ENCODE measurements at regions of chr17 and their contacts with region 1.

Region 1: GRCh38 chr17:74379495-74380085 is 12.3 kb downstream of the GPR142 start:
- DNase-seq: peak; percentile 75 to 99
- H3K4me3 ChIP-seq: peak overlapping the region; percentile 1 to 54 (median 36); a peak in 6 of 8 replicates
- H3K27ac ChIP-seq: no peak overlapping the region
- H3K4me1 ChIP-seq: peaks cover 0 to 9% (median 6%) of the 10 kb centered on the region in 4 experiments; a peak in 6 of 7 replicates
- H3K27me3 ChIP-seq: 0 out of 7 replicates have a peak, but pooled peaks cover 0 to 1% (median 0%) of the 10 kb centered on the region in 4 experiments
- CTCF ChIP-seq: peak; percentile 86 to 96 (median 93)
- EP300 ChIP-seq: no peak
- POLR2A ChIP-seq: no peak
- RAD21 ChIP-seq: peak; percentile 98 to 99

Region 2: DNA sequence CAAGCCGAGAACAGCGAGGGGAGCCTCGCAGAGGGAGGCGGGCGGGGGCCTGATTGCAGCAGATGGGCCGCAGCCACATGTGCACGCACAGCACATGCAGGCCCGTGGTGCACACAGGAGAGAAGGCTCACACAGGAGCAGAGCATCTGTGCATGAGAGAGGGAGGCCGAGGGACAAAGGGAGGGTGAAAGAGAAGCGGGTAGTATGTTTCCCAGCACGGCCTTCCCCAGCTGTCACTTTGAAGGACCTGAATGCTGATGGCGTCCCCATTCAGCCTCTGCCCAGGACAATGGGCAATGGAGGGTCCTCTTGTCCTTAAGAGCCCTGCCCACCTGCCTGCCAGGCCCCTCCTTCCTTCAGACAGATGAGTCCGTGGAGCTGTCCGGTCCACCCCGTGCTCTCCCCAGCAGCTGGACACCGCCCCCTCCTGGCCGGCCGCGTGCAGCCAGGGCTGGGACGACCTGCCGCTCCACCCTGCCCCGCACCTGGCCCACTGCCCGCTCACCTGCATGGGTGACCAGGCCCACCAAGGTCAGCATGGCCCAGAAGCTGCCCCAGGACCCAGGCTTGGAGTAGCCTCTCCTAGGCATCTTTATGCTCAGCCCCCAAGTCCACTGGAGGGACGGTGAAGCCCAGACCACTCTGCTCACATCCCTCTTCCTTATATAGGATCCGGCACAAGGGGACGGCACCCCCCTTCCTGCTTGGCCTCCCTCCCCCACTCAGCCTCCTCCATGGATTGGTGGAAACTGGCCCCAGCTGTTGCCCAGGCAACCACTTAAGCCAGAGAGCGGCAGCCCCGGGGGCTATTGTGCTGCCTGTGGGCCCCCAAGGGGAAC is 18.1 kb before region 1 on chr17 and contains the start of gene BTBD17:
- CTCF ChIA-PET with region 1: interaction called, 106 read pairs
- POLR2A ChIA-PET with region 1: interaction called, 3 read pairs
- DNase-seq: peak in 1 of 2 experiments; percentile 97
- H3K4me3 ChIP-seq: peak within 1 kb of the TSS in 3 of 4 experiments; percentile 24 to 54 (median 45); a peak in 6 of 8 replicates
- H3K27ac ChIP-seq: peak within 1 kb of the TSS; percentile 48
- H3K4me1 ChIP-seq: peaks cover 5 to 29% (median 19%) of the 10 kb centered on the region in 4 experiments
- H3K27me3 ChIP-seq: no peaks in the 10 kb centered on the region
- CTCF ChIP-seq: peak; percentile 82 to 100 (median 93)
- EP300 ChIP-seq: no peak
- POLR2A ChIP-seq: peak in 1 of 2 experiments; percentile 40; a peak in 1 of 3 replicates
- RAD21 ChIP-seq: peak; percentile 62 to 73
- total RNA-seq, gene BTBD17: 7.0 and 7.8 TPM in 2 replicates

Region 3: DNA sequence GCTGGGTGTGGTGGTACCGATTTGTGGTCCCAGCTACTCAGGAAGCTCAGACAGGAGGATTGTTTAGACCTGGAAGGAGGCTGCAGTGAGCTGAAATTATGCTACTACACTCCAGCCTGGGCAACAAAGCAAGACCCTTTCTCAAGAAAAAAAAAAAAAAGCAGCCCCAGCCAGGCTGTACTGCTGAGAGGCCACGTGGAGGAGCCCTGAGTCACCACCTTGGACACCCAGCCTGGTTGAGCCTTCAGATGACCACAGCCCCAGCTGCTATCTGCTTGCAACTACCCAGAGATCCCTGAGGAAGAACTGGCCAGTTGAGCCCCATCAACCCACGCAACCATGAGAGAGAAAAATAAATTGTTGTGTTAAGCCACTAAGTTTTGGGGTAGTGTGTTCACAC is 28.7 kb after region 1 on chr17:
- CTCF ChIA-PET with region 1: interaction called, 14 read pairs
- POLR2A ChIA-PET with region 1: no interaction called
- DNase-seq: no peak
- H3K4me3 ChIP-seq: no peak overlapping the region
- H3K27ac ChIP-seq: no peak overlapping the region
- H3K4me1 ChIP-seq: peaks cover 3 to 23% (median 14%) of the 10 kb centered on the region in 4 experiments
- H3K27me3 ChIP-seq: no peaks in the 10 kb centered on the region
- CTCF ChIP-seq: peak; percentile 14 to 27 (median 15); a peak in 3 of 4 replicates
- EP300 ChIP-seq: no peak
- POLR2A ChIP-seq: no peak
- RAD21 ChIP-seq: peak; percentile 27 to 52; a peak in 3 of 4 replicates

Region 4: GRCh38 chr17:74437702-74438101 is 58.1 kb after region 1 on chr17:
- CTCF ChIA-PET with region 1: interaction called, 63 read pairs
- POLR2A ChIA-PET with region 1: interaction called, 5 read pairs
- DNase-seq: no peak
- H3K4me3 ChIP-seq: no peak overlapping the region
- H3K27ac ChIP-seq: no peak overlapping the region
- H3K4me1 ChIP-seq: peaks cover 5 to 16% (median 12%) of the 10 kb centered on the region in 4 experiments
- H3K27me3 ChIP-seq: peaks cover 0 to 7% (median 3%) of the 10 kb centered on the region in 4 experiments; a peak in 3 of 7 replicates
- CTCF ChIP-seq: peak; percentile 73 to 97 (median 88)
- EP300 ChIP-seq: no peak
- POLR2A ChIP-seq: no peak
- RAD21 ChIP-seq: peak; percentile 96

Region 5: GRCh38 chr17:74493381-74493833 is 113.8 kb after region 1 on chr17:
- CTCF ChIA-PET with region 1: interaction called, 22 read pairs
- POLR2A ChIA-PET with region 1: no interaction called
- DNase-seq: peak; percentile 41 to 89
- H3K4me3 ChIP-seq: no peak overlapping the region
- H3K27ac ChIP-seq: no peak overlapping the region
- H3K4me1 ChIP-seq: no peaks in the 10 kb centered on the region
- H3K27me3 ChIP-seq: no peaks in the 10 kb centered on the region
- CTCF ChIP-seq: peak; percentile 91 to 98 (median 92)
- EP300 ChIP-seq: no peak
- POLR2A ChIP-seq: no peak
- RAD21 ChIP-seq: peak; percentile 94 to 97

Region 6: GRCh38 chr17:74601944-74602572 is 222.5 kb after region 1 on chr17:
- CTCF ChIA-PET with region 1: interaction called, 11 read pairs
- POLR2A ChIA-PET with region 1: no interaction called
- DNase-seq: peak in 1 of 2 experiments; percentile 65
- H3K4me3 ChIP-seq: no peak overlapping the region
- H3K27ac ChIP-seq: no peak overlapping the region
- H3K4me1 ChIP-seq: peaks cover 0 to 6% (median 2%) of the 10 kb centered on the region in 4 experiments; a peak in 1 of 7 replicates
- H3K27me3 ChIP-seq: peaks cover 0 to 2% (median 0%) of the 10 kb centered on the region in 4 experiments; a peak in 1 of 7 replicates
- CTCF ChIP-seq: peak; percentile 72 to 77 (median 73)
- EP300 ChIP-seq: no peak
- POLR2A ChIP-seq: no peak
- RAD21 ChIP-seq: peak; percentile 79 to 83

Region 7: DNA sequence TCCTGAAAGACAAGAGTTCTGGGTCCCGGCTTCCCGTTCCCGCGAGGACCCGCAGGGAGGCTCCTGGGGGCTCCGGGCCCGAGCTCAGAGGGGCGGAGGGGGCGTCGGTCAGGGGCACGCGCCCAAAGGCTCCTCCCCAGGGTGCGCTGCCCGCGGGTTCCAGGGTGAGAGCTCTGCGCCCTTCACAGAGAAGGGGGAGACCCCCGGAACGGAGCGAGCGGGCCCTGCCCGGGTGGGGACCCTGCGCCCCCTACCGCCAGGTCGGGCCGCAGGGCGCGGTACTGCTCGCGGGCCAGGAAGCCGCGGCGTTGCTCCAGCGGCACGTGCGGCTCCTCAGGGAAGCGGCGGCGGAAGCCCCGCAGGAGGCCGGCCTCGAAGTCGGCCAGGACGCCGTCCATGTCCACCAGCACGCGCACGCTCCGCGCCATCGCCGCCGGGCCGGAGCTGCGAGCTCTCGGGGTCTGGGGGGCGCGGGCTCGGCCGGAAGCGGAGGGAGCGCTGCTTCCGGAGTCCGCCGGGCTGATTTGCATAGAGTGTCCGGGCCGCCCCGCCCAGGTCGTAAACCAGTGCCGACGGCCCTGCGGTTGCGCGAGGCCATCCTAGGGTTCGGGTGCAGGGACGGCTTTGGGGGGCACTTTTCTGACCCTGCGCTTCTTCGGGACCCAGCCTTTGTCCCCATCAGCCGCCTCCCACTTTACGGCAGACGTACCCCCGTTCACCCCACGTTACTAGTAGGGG is 751.9 kb after region 1 on chr17 and contains the start of gene NT5C:
- CTCF ChIA-PET with region 1: no interaction called
- POLR2A ChIA-PET with region 1: no interaction called
- DNase-seq: peak; percentile 58 to 91
- H3K4me3 ChIP-seq: peak within 1 kb of the TSS; percentile 69 to 95 (median 74)
- H3K27ac ChIP-seq: peak within 1 kb of the TSS; percentile 81
- H3K4me1 ChIP-seq: peaks cover 0 to 5% (median 4%) of the 10 kb centered on the region in 4 experiments; a peak in 5 of 7 replicates
- H3K27me3 ChIP-seq: no peaks in the 10 kb centered on the region
- CTCF ChIP-seq: peak; percentile 65 to 72 (median 68)
- EP300 ChIP-seq: no peak
- POLR2A ChIP-seq: peak; percentile 72 to 75; a peak in 2 of 3 replicates
- RAD21 ChIP-seq: peak; percentile 32 to 42; a peak in 2 of 4 replicates
- total RNA-seq, gene NT5C: 52.1 and 66.9 TPM in 2 replicates

Measured in H1 (cell line).